ENCODE measurements at regions of chr19 and their contacts with region 1.

Region 1: DNA sequence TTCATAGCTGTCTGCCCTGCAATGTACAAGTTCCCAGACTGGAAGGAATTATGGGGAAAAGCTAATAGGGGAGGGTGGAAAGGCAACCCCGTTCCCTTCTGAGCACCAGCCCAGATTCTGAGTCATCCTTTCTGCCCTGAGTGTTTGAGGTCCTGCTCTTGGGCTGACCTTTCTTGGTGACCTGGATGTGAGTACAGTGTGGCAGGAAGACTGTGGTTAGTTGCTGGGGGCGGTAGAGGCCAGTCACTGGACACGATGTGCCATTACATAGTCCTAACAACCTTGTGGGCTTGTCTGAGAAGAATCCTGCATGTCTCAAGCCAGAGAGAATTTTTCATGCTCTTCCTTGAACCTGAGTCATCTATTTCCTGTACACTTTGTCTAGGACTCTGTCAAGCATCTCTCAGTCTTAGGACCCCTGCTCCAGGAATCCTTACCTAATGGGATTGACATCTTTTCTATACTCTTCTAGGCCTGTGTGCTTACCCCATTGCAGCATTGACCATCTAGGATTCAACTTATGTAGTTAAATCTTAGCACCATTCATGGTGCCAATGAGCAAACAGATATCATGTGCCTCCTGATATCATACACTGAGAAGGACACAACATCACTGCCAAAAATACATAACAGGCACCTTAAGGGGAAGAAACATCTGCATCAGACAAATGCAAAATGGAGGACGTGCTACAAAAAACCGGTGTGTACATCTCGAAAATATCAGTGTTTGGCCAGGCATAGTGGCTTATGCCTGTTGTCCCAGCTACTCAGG is 8.1 kb upstream of the ANGPTL4 start:
- DNase-seq: no peak
- CTCF ChIP-seq: no peak

Region 2: GRCh38 chr19:8334458-8335342 is 21.1 kb before region 1 on chr19:
- CTCF ChIA-PET with region 1: interaction called, 27 read pairs
- POLR2A ChIA-PET with region 1: no interaction called
- DNase-seq: peak; percentile 62
- CTCF ChIP-seq: no peak

Region 3: GRCh38 chr19:8371011-8371804 is 15.4 kb after region 1 on chr19:
- CTCF ChIA-PET with region 1: interaction called, 41 read pairs
- POLR2A ChIA-PET with region 1: no interaction called
- DNase-seq: no peak
- CTCF ChIP-seq: no peak

Region 4: GRCh38 chr19:8396563-8397203 is 40.9 kb after region 1 on chr19:
- CTCF ChIA-PET with region 1: interaction called, 31 read pairs
- POLR2A ChIA-PET with region 1: no interaction called
- DNase-seq: peak; percentile 81
- CTCF ChIP-seq: peak; percentile 63

Region 5: DNA sequence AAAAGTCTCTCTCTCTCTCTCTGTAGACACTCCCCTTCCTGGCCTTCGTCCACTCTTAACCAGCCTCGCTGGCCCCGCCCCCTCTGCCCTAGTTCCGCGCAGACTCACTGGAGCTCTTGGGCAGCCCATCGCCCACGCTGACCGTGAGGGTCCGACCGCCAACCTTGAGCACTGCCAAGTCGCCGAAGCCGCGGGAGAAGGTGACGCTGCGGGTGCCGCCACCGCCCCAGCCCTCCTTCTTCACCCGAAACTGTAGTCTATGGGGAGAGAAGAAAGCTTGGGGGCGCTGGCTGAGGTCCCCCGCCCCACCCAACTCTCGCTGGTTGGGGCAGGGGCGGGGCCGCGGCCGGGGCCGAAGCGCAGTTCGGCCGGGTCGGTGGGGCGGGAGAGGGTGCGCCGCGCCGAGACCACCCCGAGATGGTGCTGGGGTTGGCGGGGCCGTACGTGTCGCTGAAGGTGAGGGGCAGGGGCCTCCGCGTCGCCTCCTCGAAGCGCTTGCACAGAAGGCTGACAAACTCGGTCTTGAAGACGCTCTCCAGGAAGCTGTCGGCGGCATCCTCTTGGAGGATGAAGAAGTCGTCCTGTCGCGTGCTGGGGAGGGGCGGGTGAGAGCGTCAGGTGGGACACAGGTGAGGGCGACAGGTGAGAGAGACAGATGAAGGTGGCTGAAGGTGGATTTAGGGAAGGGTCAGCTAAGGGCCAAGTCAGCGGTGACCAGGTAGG is 170.7 kb after region 1 on chr19:
- CTCF ChIA-PET with region 1: no interaction called
- POLR2A ChIA-PET with region 1: no interaction called
- DNase-seq: peak; percentile 67
- CTCF ChIP-seq: no peak

Measured in GM10248 (cell line).